Transverse colon (tissue), 4 donors: ENCODE measurements at regions of chr11 and their contacts with region 1.

Region 1: DNA sequence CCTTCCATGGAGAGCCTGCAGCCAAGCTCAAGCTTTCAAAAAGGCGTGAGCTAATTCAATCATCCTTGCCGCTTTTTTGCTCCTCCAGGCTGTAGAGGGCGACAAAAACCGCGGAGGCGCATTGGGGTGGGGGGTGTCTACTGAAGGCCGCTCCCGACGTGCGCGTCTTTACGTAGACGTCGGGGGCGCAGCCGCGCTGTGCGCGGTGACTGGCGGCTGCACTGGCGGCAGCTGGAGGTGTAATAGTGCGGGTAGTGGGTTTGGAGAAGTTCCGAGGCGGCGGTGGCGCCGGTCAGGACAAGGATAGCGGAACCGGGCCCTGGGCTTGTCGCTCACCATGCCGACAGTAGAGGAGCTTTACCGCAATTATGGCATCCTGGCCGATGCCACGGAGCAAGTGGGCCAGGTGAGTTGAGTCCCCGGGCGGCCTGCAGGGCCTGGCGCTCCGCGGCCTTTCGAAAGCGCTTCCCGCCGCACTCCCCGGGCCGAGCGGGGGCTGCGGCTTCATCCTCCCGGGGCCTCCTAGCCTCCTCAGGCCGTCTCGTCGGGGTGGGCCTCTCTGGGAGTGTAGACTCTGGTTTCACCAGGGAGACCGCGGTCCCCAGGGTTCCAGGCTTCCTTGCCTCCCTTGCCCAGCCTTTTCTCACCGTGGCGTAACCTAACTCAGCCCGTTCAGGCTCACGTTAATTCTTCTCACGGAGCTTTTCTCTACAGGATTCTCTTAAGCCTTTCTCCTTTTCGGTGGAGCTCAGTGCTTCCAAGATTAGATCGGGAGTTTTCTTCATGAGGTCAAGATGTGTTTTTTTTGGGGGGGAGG is at the start of gene API5:
- DNase-seq: peak; percentile 93
- H3K4me3 ChIP-seq: peak within 1 kb of the TSS; percentile 80 to 98 (median 84)
- H3K27ac ChIP-seq: peak within 1 kb of the TSS; percentile 89 to 95 (median 90)
- H3K4me1 ChIP-seq: peaks cover 11 to 27% (median 24%) of the 10 kb centered on the region in 4 donors
- H3K27me3 ChIP-seq: no peaks in the 10 kb centered on the region
- CTCF ChIP-seq: peak; percentile 60 to 74 (median 70)
- EP300 ChIP-seq: no peak
- POLR2A ChIP-seq: peak; percentile 84
- total RNA-seq, gene API5: 18.7 to 74.6 (median 46.6) TPM

Region 2: GRCh38 chr11:43419460-43419859 is 107.5 kb after region 1 on chr11:
- in situ Hi-C with region 1: loop called in 2 of 4 experiments (anchors 25 kb)
- intact Hi-C with region 1: no loop called
- DNase-seq: peak; percentile 21
- H3K4me3 ChIP-seq: no peak overlapping the region
- H3K27ac ChIP-seq: no peak overlapping the region
- H3K4me1 ChIP-seq: peaks cover 0 to 9% (median 0%) of the 10 kb centered on the region in 4 donors
- H3K27me3 ChIP-seq: no peaks in the 10 kb centered on the region
- CTCF ChIP-seq: peak; percentile 47 to 63 (median 60)
- EP300 ChIP-seq: no peak
- POLR2A ChIP-seq: no peak